ENCODE measurements at regions of chr5 and their contacts with region 1.

Region 1: GRCh38 chr5:36264202-36264760 is 22.6 kb upstream of the NADK2 start:
- DNase-seq: no peak
- H3K4me3 ChIP-seq: no peak overlapping the region
- CTCF ChIP-seq: no peak

Region 2: DNA sequence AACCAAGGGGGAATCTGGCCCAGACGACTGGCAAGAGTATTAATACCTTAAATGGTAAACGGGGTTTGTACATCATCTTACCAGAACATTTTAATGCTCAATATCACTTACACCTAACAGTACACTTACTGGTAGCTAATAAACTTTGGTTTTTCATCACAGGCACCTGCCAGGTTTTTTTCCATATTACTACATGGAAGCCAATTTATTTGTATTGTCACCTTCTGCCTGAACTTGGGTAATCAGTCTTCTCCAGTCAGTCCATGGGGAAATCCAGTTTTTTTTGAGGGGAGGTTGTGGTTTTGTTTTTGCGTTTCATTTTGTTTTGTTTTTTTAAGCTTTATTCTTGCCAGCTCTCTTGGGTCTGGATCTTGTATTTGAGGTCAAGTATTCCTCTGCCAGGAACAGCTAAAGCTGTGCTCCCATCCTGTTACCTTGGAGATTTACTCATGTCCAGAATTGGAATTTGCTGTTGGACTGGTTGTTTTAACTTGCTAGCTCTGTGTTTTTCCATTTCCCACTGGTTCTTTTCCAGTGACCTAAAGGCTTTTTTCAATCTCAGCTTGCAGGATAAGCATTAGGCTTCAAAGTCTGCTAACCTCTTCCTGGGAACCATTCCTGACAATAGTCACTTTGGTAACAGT is 11.4 kb before region 1 on chr5:
- CTCF ChIA-PET with region 1: interaction called, 30 read pairs
- POLR2A ChIA-PET with region 1: no interaction called
- DNase-seq: no peak
- H3K4me3 ChIP-seq: no peak overlapping the region
- CTCF ChIP-seq: no peak

Region 3: GRCh38 chr5:36305571-36306326 is 41.5 kb after region 1 on chr5:
- CTCF ChIA-PET with region 1: interaction called, 63 read pairs
- POLR2A ChIA-PET with region 1: no interaction called
- DNase-seq: no peak
- H3K4me3 ChIP-seq: no peak overlapping the region
- CTCF ChIP-seq: peak; percentile 59

Region 4: GRCh38 chr5:36397901-36398536 is 133.7 kb after region 1 on chr5:
- CTCF ChIA-PET with region 1: interaction called, 172 read pairs
- POLR2A ChIA-PET with region 1: interaction called, 4 read pairs
- DNase-seq: no peak
- H3K4me3 ChIP-seq: no peak overlapping the region
- CTCF ChIP-seq: peak; percentile 40

Region 5: DNA sequence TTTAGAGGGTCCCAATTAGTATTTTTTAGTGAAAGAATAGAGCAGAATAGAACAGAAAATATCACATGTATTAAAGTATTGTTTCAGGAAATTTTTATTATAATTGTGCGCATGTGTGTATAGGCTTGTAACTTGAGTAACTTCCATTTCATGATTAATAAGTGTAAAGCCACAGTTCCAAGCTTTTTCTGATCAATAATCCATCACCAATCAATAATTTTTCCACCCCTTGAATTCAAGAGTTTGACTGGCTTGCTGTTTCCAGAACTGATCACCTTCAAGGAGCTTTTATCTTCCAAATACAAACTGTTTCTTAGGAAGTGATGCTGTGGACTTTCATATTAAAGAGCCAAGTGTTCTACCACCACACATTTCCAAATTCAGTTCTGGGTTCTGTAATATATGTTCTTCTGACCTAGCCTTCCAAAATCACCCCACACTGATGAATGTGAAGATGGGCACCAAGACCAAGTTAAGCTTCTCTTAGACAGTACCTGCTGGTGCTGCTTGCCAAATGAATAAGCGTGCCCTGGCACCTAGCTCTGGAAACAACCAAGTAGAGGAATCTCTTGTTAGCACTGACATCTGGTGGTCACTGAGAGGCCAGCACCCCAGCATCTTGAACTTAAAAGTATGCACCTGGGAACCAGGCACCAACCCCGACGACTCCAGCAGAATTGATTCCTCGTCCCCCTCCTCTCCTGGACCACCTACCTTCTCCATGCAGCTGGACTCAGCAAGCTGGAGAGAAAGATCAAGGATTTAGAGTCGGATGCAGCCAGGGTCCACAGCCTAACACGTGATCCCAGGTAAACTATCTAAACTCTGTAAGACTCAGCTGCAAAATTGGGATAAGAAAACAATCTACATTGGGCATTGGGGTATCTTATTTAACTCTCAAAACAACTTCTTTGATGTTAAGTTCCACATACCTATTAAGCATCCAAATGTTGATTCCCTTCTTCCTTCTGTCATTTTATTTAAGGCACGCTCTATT is 431.7 kb after region 1 on chr5:
- CTCF ChIA-PET with region 1: interaction called, 35 read pairs
- POLR2A ChIA-PET with region 1: no interaction called
- DNase-seq: no peak
- H3K4me3 ChIP-seq: no peak overlapping the region
- CTCF ChIP-seq: peak; percentile 70